Activated CD4-positive, alpha-beta memory T cell treated with anti-CD3 and anti-CD28 coated beads for 36 hours (primary cell): ENCODE measurements at regions of chr10 and their contacts with region 1.

Region 1: DNA sequence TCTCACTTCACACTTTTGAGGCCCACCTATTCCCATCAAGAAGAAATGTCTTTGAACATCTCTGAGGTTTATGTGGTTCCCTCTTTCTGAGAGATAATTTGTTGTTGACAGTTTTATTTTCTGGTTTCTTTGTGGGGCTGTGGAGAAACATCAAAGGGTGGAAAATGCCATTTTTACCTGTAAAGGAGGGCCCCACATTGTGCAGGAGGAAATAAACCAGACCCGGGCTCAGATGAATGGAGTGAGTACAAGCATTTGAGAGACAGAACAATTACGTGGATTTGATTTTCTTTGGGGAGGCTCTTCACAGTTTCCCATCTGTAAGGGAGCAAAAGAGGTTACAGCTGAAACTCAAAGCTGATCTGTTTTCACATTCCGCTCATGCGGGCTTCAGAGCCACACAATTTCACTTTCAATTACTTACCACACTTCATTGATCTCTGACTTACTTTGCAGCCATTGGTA is 29.8 kb downstream of the ITPRIP start:
- DNase-seq: peak; percentile 54
- H3K4me3 Mint-ChIP-seq: no peak overlapping the region
- H3K27ac Mint-ChIP-seq: peak overlapping the region; percentile 44
- H3K4me1 Mint-ChIP-seq: peaks cover 49% of the 10 kb centered on the region
- H3K27me3 Mint-ChIP-seq: peaks cover 5% of the 10 kb centered on the region

Region 2: DNA sequence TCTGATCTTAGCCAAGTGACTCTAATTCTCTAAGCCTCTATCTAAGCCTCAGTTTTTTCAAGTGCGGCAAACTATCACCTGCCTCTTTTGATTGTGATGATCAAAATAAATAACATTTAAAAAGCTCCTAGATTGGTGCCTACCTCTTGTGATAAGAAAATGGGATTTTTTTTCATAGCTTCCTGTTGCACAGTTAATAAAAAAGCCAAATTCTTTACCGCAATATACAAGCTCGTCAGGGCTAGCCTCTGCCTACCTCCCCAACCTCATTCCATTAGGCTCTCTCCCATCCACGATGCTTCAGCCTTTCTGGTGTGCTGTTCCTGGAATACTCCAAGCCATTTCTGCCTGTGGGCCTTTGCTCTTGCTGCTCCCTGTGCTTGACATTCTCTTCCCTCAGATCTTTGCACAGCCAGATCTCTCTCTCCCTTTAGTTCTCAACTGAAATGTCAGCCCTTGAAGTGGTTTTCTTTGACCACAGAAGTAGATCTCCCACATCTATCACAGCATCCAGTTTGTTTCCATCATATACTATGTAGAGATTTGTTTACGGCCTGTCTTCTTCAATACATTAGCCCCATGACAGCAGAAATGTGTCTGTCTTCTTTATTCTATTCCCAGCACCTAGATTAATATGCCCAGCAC is 137.7 kb before region 1 on chr10:
- CTCF ChIA-PET with region 1: no interaction called
- POLR2A ChIA-PET with region 1: no interaction called
- intact Hi-C with region 1: no loop called
- DNase-seq: no peak
- H3K4me3 Mint-ChIP-seq: no peak overlapping the region
- H3K27ac Mint-ChIP-seq: no peak overlapping the region
- H3K4me1 Mint-ChIP-seq: peaks cover 17% of the 10 kb centered on the region
- H3K27me3 Mint-ChIP-seq: peaks cover 2% of the 10 kb centered on the region

Region 3: DNA sequence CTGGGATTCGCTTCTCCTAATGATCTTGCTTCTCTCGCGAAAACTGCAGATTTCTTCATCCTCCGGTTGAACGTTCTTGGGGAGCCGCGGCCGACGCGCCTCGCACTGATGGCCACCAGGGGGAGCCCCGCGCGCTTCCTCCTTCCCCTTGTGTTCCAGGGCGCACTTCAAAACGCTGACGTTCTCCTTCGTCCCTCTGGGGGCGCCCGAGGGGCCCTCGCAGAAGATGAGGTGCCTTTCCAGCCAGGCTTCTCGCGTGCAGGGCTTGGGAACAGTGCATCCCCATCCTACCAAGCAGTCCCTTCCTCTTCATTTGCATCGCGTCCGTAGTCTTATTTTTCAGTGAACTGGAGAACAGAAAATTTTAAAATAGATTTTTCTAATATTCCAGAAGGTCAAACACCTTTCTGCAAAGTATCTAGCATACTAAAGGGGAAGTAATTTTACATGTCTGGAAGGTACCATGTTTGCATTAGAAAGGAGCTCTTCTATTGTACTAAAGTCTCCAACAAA is 17.0 kb before region 1 on chr10:
- CTCF ChIA-PET with region 1: interaction called, 186 read pairs
- POLR2A ChIA-PET with region 1: no interaction called
- intact Hi-C with region 1: loop called (anchors 2 kb)
- DNase-seq: peak; percentile 92
- H3K4me3 Mint-ChIP-seq: peak overlapping the region; percentile 39
- H3K27ac Mint-ChIP-seq: no peak overlapping the region
- H3K4me1 Mint-ChIP-seq: peaks cover 12% of the 10 kb centered on the region
- H3K27me3 Mint-ChIP-seq: peaks cover 23% of the 10 kb centered on the region

Region 4: GRCh38 chr10:104322416-104322782 is 13.9 kb after region 1 on chr10:
- CTCF ChIA-PET with region 1: interaction called, 39 read pairs
- POLR2A ChIA-PET with region 1: interaction called, 4 read pairs
- intact Hi-C with region 1: no loop called
- DNase-seq: peak; percentile 64
- H3K4me3 Mint-ChIP-seq: peak overlapping the region; percentile 10
- H3K27ac Mint-ChIP-seq: peak overlapping the region; percentile 80
- H3K4me1 Mint-ChIP-seq: peaks cover 83% of the 10 kb centered on the region
- H3K27me3 Mint-ChIP-seq: no peaks in the 10 kb centered on the region

Region 5: DNA sequence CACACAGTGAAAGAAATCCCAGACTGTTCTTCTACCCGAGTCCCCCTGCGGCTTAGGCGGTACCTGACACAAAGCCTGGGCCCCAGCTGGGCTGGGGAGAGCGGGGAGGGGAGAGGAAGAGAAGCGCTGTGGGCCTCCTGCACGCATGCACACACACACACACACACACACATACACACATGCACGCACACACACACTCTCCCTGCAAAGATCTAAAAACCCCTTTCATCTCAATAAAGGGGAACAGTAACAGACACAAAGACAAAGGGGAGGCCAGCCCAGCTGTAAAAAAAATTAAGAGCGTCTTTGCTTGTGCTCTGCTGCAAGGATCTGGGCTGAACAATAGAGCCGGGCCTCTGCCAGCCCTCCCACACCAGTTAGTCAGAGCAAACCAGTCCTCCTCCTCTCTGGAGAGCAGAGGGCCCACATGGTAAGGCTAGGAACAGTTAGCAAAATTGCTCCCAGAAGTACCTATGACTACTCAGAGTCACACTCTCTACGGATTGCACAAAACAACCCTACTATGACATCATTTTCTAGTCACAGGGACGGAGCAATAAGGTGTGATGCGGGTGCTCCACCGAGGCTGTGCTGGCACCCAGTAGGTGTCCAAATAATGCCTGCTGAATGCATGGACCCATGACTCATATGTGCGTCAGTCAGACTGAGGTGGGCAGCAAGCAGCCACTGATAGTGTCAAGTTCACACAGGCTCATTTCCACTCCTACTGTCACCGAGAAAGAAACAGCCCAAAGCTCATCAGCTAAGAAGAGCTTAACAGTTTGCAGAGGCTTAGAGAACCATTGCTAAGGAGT is 20.6 kb after region 1 on chr10:
- CTCF ChIA-PET with region 1: interaction called, 82 read pairs
- POLR2A ChIA-PET with region 1: interaction called, 3 read pairs
- intact Hi-C with region 1: loop called (anchors 1 kb)
- DNase-seq: peak; percentile 92
- H3K4me3 Mint-ChIP-seq: peak overlapping the region; percentile 60
- H3K27ac Mint-ChIP-seq: peak overlapping the region; percentile 91
- H3K4me1 Mint-ChIP-seq: peaks cover 96% of the 10 kb centered on the region
- H3K27me3 Mint-ChIP-seq: no peaks in the 10 kb centered on the region

Region 6: DNA sequence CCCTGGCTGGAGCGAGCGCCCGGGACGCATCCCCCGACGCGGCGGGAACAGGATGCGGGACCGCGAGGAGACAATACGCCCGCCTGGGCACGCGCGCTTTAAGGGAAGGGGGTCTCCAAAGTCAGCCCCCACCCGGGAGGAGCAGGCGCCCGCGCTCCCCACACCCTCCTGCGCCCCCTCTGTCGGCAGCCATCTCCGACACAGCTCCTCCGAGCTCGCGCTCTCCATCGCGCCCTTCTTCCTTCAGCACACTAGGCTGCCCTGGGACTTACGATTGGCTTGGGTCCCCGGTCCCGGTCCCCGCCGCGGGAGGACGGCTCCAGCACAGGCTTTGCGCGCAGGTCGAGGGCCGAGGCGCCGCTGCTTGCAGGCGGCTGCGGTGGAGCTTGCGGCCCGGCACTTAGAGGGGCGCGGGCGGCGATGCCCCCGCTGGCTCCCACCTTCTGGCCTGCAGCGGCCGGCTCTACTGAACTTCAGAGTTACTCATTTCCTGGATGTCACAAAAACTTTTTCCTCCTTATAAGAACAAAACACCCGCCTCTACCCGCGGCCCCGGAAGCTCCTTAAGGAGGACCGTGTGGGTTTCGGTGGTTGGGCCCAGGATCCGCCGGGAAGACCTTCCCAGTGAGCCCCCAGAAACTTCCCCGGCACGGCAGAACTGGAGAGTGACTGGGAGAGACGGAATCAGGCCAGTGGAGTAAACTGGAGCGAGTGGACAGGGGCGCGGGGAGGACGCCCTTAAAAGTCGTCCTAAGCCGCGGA is 29.7 kb after region 1 on chr10 and contains the start of gene ITPRIP:
- CTCF ChIA-PET with region 1: interaction called, 82 read pairs
- POLR2A ChIA-PET with region 1: interaction called, 17 read pairs
- intact Hi-C with region 1: loop called (anchors 1 kb)
- DNase-seq: peak; percentile 81
- H3K4me3 Mint-ChIP-seq: peak within 1 kb of the TSS; percentile 82
- H3K27ac Mint-ChIP-seq: peak within 1 kb of the TSS; percentile 90
- H3K4me1 Mint-ChIP-seq: peaks cover 48% of the 10 kb centered on the region
- H3K27me3 Mint-ChIP-seq: no peaks in the 10 kb centered on the region
- total RNA-seq, gene ITPRIP: 15.6 to 16.6 TPM

Region 7: DNA sequence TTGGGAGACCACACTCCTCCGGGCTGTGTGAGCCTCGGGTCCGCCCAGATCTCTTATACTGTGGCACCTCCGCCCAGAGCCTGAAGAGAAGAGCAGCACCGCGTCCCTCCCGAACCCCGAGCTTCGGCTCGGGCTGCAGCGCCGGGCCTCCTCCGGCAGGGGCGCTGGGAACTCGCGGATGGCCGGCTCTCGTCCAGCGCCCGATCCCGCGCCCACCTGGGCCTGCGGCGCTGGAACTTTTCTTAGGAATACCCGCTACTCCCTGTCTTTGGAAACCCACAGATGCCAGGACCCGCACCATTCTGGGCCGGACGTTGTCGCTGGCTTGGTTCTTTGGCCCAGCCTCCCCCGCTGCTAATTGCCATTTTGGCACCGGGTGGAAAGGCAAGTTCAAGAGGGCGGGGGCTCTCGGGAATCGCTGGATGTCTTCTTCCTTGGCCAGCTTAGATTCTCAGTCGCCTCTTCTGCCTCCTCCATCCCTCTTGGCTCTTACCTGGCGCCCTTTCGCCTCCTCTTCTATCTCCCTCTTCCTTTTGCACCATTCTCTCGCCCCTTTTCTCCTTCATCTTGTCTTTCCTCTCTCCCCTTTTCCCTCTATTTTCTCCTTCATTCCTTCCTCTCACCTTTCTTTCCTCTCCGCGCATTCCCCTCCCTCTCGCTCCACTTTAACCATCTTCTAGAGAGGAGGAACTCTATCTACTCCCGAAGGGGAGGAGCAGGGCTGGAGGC is 330.6 kb after region 1 on chr10:
- CTCF ChIA-PET with region 1: no interaction called
- POLR2A ChIA-PET with region 1: no interaction called
- intact Hi-C with region 1: no loop called
- DNase-seq: no peak
- H3K4me3 Mint-ChIP-seq: no peak overlapping the region
- H3K27ac Mint-ChIP-seq: no peak overlapping the region
- H3K4me1 Mint-ChIP-seq: no peaks in the 10 kb centered on the region
- H3K27me3 Mint-ChIP-seq: peaks cover 52% of the 10 kb centered on the region